Activated CD8-positive, alpha-beta T cell treated with anti-CD3 and anti-CD28 coated beads, Interleukin-2, amount 10 ng/mL, durations not matched to agents 7 days and 5 days (primary cell): ENCODE measurements at regions of chr9 and their contacts with region 1.

Region 1: GRCh38 chr9:36436909-36437308 is 36.8 kb upstream of the RNF38 start:
- DNase-seq: no peak
- ATAC-seq: no peak
- H3K4me3 Mint-ChIP-seq: no peak overlapping the region
- H3K27ac Mint-ChIP-seq: no peak overlapping the region
- H3K4me1 Mint-ChIP-seq: peaks cover 13% of the 10 kb centered on the region
- H3K27me3 Mint-ChIP-seq: no peaks in the 10 kb centered on the region

Region 2: DNA sequence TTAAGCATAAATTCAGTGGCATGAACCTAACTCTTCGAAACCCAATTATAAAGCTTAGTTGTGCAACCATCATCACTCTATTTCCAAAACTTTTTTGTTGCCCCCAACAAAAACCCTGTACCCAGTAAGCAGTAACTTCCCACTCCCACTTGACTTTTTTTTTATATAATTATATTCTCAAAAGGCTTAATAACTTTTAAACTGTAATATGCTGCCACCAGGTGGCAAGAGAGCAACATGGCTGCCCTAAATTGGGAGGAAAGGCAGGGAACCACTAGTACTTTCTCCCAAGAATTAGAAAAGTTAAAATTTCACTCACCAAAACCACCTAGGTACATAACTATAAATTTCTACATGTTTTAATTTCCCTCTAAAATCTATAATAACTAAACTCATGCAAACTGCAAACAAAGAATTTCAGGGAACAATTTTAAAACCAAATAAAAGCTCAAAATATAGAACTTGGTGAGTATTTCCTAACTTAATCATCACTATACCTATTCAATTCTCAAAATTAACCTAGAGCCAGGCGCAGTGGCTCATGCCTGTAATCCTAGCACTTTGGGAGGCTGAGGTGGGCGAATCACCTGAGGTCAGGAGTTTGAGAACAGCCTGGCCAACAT is 13.3 kb after region 1 on chr9:
- CTCF ChIA-PET with region 1: interaction called, 17 read pairs
- POLR2A ChIA-PET with region 1: no interaction called
- DNase-seq: peak; percentile 35
- ATAC-seq: no peak
- H3K4me3 Mint-ChIP-seq: no peak overlapping the region
- H3K27ac Mint-ChIP-seq: no peak overlapping the region
- H3K4me1 Mint-ChIP-seq: peaks cover 6% of the 10 kb centered on the region
- H3K27me3 Mint-ChIP-seq: no peaks in the 10 kb centered on the region